ENCODE measurements at regions of chrX and their contacts with region 1.

Region 1: GRCh38 chrX:79182616-79183015 is 38.1 kb downstream of the GPR174 start:
- DNase-seq: peak; percentile 84
- ATAC-seq: peak; percentile 93
- H3K4me3 ChIP-seq: no peak overlapping the region
- H3K27ac ChIP-seq: peak overlapping the region; percentile 57
- H3K4me1 ChIP-seq: peaks cover 12% of the 10 kb centered on the region; the same call in 1 of the 2 replicates
- H3K27me3 ChIP-seq: no peaks in the 10 kb centered on the region
- CTCF ChIP-seq: no peak
- EP300 ChIP-seq: peak; percentile 94
- POLR2A ChIP-seq: no peak
- RAD21 ChIP-seq: 0 out of 2 replicates have a peak, but pooled peaks have one; percentile 17

Region 2: DNA sequence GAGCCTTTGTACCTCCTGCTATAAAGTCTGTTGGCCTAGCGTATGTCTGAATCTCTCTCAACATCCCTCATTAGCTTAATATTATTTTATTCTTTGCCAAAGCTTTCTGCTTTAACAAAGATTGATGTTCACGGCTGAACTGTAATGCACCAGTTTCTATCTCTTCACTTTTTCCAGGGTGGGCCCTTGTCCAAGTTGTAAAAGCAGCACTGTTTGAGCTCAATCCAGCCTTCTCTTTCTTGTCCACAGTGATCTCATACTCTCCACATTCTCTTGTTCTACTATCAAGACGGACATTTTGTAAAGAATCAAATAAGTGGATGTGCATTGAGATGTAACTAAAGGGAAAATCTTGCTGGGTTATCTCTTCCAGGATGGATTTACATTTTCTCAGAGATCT is 489.1 kb before region 1 on chrX:
- CTCF ChIA-PET with region 1: no interaction called
- POLR2A ChIA-PET with region 1: no interaction called
- RAD21 ChIA-PET with region 1: no interaction called
- SMC1A ChIA-PET with region 1: no interaction called
- in situ Hi-C with region 1: no loop called
- intact Hi-C with region 1: no loop called
- DNase-seq: no peak
- ATAC-seq: no peak
- H3K4me3 ChIP-seq: no peak overlapping the region
- H3K27ac ChIP-seq: no peak overlapping the region
- H3K4me1 ChIP-seq: no peaks in the 10 kb centered on the region
- H3K27me3 ChIP-seq: no peaks in the 10 kb centered on the region
- CTCF ChIP-seq: no peak
- EP300 ChIP-seq: no peak
- POLR2A ChIP-seq: no peak
- RAD21 ChIP-seq: no peak

Region 3: DNA sequence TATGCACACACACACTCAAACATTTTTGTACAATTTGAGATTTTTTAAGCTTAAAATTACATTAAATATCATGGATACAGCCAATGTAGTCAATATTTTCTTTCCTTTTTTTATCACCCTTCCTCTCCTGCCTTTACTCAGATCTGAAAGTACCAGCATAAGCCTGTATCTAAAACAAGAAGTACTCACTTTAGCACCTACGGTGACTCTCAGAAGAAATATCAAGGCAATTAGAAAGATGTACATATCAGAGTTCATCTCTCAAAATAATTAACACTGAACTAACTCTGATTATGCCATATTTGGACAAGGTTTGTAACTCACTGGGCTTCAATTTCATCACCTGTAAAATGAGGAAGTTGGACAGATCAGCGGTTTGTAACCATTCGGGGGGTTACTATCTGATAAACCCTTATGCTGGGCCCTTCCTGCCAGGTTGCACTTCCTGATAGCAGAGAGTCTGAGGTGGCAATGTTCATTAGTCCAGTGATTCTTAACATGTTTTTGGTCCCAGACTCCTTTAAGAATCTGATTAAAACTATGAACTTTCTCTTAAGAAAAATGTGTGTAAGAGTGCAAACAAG is 43.9 kb before region 1 on chrX:
- CTCF ChIA-PET with region 1: no interaction called
- POLR2A ChIA-PET with region 1: interaction called, 3 read pairs
- RAD21 ChIA-PET with region 1: interaction called, 44 read pairs
- SMC1A ChIA-PET with region 1: interaction called, 16 read pairs
- in situ Hi-C with region 1: no loop called
- intact Hi-C with region 1: no loop called
- DNase-seq: peak; percentile 79
- ATAC-seq: peak; percentile 95
- H3K4me3 ChIP-seq: no peak overlapping the region
- H3K27ac ChIP-seq: peak overlapping the region; percentile 84
- H3K4me1 ChIP-seq: peaks cover 10% of the 10 kb centered on the region; the same call in 1 of the 2 replicates
- H3K27me3 ChIP-seq: no peaks in the 10 kb centered on the region
- CTCF ChIP-seq: no peak
- EP300 ChIP-seq: peak; percentile 78 to 83; a peak in 2 of 4 replicates
- POLR2A ChIP-seq: no peak
- RAD21 ChIP-seq: no peak

Region 4: GRCh38 chrX:79146640-79147390 is 35.8 kb before region 1 on chrX:
- CTCF ChIA-PET with region 1: no interaction called
- POLR2A ChIA-PET with region 1: interaction called, 8 read pairs
- RAD21 ChIA-PET with region 1: interaction called, 59 read pairs
- SMC1A ChIA-PET with region 1: interaction called, 19 read pairs
- in situ Hi-C with region 1: no loop called
- intact Hi-C with region 1: loop called (anchors 5 kb)
- DNase-seq: peak; percentile 45
- ATAC-seq: peak; percentile 52
- H3K4me3 ChIP-seq: peak overlapping the region; percentile 39
- H3K27ac ChIP-seq: peak overlapping the region; percentile 73
- H3K4me1 ChIP-seq: peaks cover 8% of the 10 kb centered on the region
- H3K27me3 ChIP-seq: no peaks in the 10 kb centered on the region
- CTCF ChIP-seq: no peak
- EP300 ChIP-seq: no peak
- POLR2A ChIP-seq: no peak
- RAD21 ChIP-seq: no peak

Region 5: DNA sequence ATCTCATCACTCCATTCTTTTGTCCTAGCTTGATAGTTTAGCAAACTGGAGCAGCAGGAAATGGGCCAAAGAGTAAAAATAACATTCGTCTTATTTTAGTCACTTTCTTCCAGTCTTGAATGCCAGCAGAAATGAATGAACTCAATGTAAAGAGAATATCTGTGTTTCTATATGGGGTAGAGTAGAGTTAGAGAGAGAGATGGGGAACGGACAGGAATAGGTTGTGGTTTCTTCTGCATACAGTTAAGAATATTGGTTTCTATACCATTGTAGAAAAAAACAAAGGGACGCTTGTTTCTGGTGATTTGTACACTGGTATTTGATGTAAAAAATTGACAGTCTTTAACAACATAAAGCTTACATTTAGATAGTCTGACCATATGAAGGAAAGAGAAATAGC is 29.3 kb before region 1 on chrX:
- CTCF ChIA-PET with region 1: interaction called, 4 read pairs
- POLR2A ChIA-PET with region 1: interaction called, 5 read pairs
- RAD21 ChIA-PET with region 1: interaction called, 59 read pairs
- SMC1A ChIA-PET with region 1: interaction called, 19 read pairs
- in situ Hi-C with region 1: no loop called
- intact Hi-C with region 1: loop called (anchors 5 kb)
- DNase-seq: no peak
- ATAC-seq: peak; percentile 48
- H3K4me3 ChIP-seq: no peak overlapping the region
- H3K27ac ChIP-seq: peak overlapping the region; percentile 8; the same call in 1 of the 2 replicates
- H3K4me1 ChIP-seq: peaks cover 2% of the 10 kb centered on the region; the same call in 1 of the 2 replicates
- H3K27me3 ChIP-seq: no peaks in the 10 kb centered on the region
- CTCF ChIP-seq: no peak
- EP300 ChIP-seq: no peak
- POLR2A ChIP-seq: no peak
- RAD21 ChIP-seq: no peak

Region 6: GRCh38 chrX:79161655-79162054 is 21.0 kb before region 1 on chrX:
- CTCF ChIA-PET with region 1: interaction called, 34 read pairs
- POLR2A ChIA-PET with region 1: interaction called, 4 read pairs
- RAD21 ChIA-PET with region 1: interaction called, 46 read pairs
- SMC1A ChIA-PET with region 1: interaction called, 116 read pairs
- in situ Hi-C with region 1: no loop called
- intact Hi-C with region 1: loop called (anchors 1 kb)
- DNase-seq: peak; percentile 72
- ATAC-seq: peak; percentile 85
- H3K4me3 ChIP-seq: no peak overlapping the region
- H3K27ac ChIP-seq: peak overlapping the region; percentile 1; the same call in 1 of the 2 replicates
- H3K4me1 ChIP-seq: peaks cover 3% of the 10 kb centered on the region
- H3K27me3 ChIP-seq: no peaks in the 10 kb centered on the region
- CTCF ChIP-seq: no peak
- EP300 ChIP-seq: peak in 1 of 2 experiments; percentile 27; a peak in 2 of 4 replicates
- POLR2A ChIP-seq: no peak
- RAD21 ChIP-seq: no peak

Region 7: GRCh38 chrX:79167462-79167861 is 15.2 kb before region 1 on chrX:
- CTCF ChIA-PET with region 1: interaction called, 34 read pairs
- POLR2A ChIA-PET with region 1: interaction called, 7 read pairs
- RAD21 ChIA-PET with region 1: interaction called, 46 read pairs
- SMC1A ChIA-PET with region 1: interaction called, 116 read pairs
- in situ Hi-C with region 1: no loop called
- intact Hi-C with region 1: no loop called
- DNase-seq: no peak
- ATAC-seq: peak; percentile 24; the same call in 2 of the 3 replicates
- H3K4me3 ChIP-seq: no peak overlapping the region
- H3K27ac ChIP-seq: no peak overlapping the region
- H3K4me1 ChIP-seq: peaks cover 7% of the 10 kb centered on the region
- H3K27me3 ChIP-seq: no peaks in the 10 kb centered on the region
- CTCF ChIP-seq: no peak
- EP300 ChIP-seq: no peak
- POLR2A ChIP-seq: no peak
- RAD21 ChIP-seq: no peak